Sigmoid colon (tissue), 7 donors: ENCODE measurements at regions of chr2 and their contacts with region 1.

Region 1: GRCh38 chr2:71614976-71615766 is 161.8 kb downstream of the DYSF start:
- DNase-seq: peak; percentile 96
- H3K4me3 ChIP-seq: no peak overlapping the region
- H3K27ac ChIP-seq: peak overlapping the region; percentile 54 to 66 (median 62)
- H3K4me1 ChIP-seq: peaks cover 0 to 22% (median 21%) of the 10 kb centered on the region in 4 donors
- H3K27me3 ChIP-seq: no peaks in the 10 kb centered on the region
- CTCF ChIP-seq: no peak
- EP300 ChIP-seq: no peak
- POLR2A ChIP-seq: no peak

Region 2: GRCh38 chr2:71668326-71669057 is 53.3 kb after region 1 on chr2:
- intact Hi-C with region 1: loop called (anchors 5 kb)
- DNase-seq: peak; percentile 46
- H3K4me3 ChIP-seq: no peak overlapping the region
- H3K27ac ChIP-seq: no peak overlapping the region
- H3K4me1 ChIP-seq: peaks cover 0 to 14% (median 9%) of the 10 kb centered on the region in 4 donors
- H3K27me3 ChIP-seq: no peaks in the 10 kb centered on the region
- CTCF ChIP-seq: no peak
- EP300 ChIP-seq: no peak
- POLR2A ChIP-seq: no peak